ENCODE measurements at regions of chr14 and their contacts with region 1.

Region 1: GRCh38 chr14:99793213-99794150 is at the start of gene EML1:
- DNase-seq: peak; percentile 83 to 88
- ATAC-seq: peak; percentile 77 to 93 (median 89)
- H3K4me3 ChIP-seq: peak within 1 kb of the TSS in 9 of 10 donors; percentile 41 to 62 (median 57)
- H3K27ac ChIP-seq: peak within 1 kb of the TSS; percentile 67 to 93 (median 87)
- H3K4me1 ChIP-seq: peaks cover 3 to 56% (median 30%) of the 10 kb centered on the region in 9 donors
- H3K27me3 ChIP-seq: peaks cover 0 to 46% (median 0%) of the 10 kb centered on the region in 7 donors
- CTCF ChIP-seq: peak in 1 of 9 donors; percentile 14
- total RNA-seq, gene EML1: 28.6 to 49.2 (median 36.3) TPM

Region 2: DNA sequence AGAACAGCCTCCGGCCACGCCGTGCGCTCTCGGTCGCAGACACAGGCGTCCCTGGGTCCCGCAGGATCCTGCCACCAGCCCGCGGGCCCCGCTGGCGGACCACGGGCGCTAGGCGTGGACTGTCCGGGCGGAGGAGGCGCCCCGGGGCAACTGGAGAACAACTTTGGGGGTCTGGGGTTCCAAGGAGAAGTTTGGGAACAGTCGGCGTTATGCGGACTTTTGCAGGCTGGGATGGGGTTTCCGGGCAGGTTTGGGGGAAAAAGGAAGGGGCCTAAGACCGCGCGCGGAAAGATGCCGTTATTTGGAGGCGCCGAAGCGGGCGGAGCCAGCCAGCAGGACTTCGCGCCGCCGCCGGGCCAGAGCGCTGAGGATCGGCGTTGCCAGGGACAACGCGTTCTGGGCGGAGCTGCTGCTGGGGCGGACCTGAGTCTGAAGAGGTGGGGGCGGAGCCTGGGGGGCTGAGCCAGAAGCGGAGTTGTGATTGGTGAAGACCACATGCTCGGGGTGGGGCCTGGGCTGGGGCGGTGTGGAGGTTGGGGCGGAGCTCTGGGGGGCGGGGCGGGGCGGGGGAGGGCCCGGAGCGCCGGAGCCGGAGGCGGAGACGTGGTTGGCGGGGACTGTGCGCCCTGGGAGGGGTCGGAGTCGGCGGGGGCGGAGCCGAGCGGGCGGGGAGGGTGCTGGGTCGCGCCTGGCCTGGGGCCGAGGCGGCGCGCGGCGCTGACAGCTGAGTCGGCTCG is 109.7 kb before region 1 on chr14 and contains the start of gene CYP46A1:
- intact Hi-C with region 1: loop called in 3 of 10 experiments (anchors 5 kb)
- DNase-seq: peak; percentile 100
- ATAC-seq: peak; percentile 97 to 99 (median 98)
- H3K4me3 ChIP-seq: peak within 1 kb of the TSS; percentile 51 to 99 (median 87)
- H3K27ac ChIP-seq: peak within 1 kb of the TSS in 9 of 10 donors; percentile 71 to 94 (median 80)
- H3K4me1 ChIP-seq: peaks cover 9 to 25% (median 15%) of the 10 kb centered on the region in 9 donors
- H3K27me3 ChIP-seq: peaks cover 0 to 25% (median 0%) of the 10 kb centered on the region in 7 donors
- CTCF ChIP-seq: no peak
- total RNA-seq, gene CYP46A1: 2.0 to 6.1 (median 3.9) TPM

Region 3: DNA sequence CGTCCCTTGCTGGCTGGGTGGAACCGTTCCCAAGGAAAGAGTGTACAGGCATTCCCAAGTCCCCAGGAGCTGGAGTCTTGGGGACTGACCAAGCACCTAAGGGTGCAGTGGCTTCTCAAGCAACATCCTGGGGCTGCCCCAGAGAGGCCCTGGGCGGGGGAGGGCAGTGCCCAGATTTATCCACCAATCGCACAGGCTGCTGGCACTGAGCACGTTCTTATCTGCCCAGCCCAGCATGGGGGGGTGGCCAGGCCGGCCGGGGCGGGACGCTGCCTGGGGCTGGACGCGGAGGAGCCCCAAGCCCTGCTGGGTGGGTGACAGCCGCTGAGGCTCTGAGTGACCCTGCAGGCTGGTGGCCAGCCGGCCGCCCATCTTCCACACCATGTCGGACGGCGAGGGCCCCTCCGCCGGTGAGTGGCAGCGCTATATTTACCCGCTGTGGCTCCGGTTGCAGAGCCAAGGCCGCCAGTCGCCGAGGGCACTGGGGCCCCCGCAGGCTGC is 56.0 kb before region 1 on chr14:
- intact Hi-C with region 1: loop called in 8 of 10 experiments (anchors 2 to 10 kb)
- DNase-seq: peak; percentile 77 to 78
- ATAC-seq: peak; percentile 68 to 87 (median 78)
- H3K4me3 ChIP-seq: peak overlapping the region; percentile 53 to 76 (median 66)
- H3K27ac ChIP-seq: peak overlapping the region; percentile 76 to 97 (median 90)
- H3K4me1 ChIP-seq: peaks cover 8 to 97% (median 68%) of the 10 kb centered on the region in 9 donors
- H3K27me3 ChIP-seq: peaks cover 0 to 18% (median 0%) of the 10 kb centered on the region in 7 donors
- CTCF ChIP-seq: no peak

Region 4: GRCh38 chr14:99831903-99832685 is 38.6 kb after region 1 on chr14:
- intact Hi-C with region 1: loop called in 1 of 10 experiments (anchors 5 kb)
- DNase-seq: no peak
- ATAC-seq: no peak
- H3K4me3 ChIP-seq: no peak overlapping the region
- H3K27ac ChIP-seq: no peak overlapping the region
- H3K4me1 ChIP-seq: peaks cover 0 to 8% (median 0%) of the 10 kb centered on the region in 9 donors
- H3K27me3 ChIP-seq: no peaks in the 10 kb centered on the region
- CTCF ChIP-seq: no peak

Region 5: DNA sequence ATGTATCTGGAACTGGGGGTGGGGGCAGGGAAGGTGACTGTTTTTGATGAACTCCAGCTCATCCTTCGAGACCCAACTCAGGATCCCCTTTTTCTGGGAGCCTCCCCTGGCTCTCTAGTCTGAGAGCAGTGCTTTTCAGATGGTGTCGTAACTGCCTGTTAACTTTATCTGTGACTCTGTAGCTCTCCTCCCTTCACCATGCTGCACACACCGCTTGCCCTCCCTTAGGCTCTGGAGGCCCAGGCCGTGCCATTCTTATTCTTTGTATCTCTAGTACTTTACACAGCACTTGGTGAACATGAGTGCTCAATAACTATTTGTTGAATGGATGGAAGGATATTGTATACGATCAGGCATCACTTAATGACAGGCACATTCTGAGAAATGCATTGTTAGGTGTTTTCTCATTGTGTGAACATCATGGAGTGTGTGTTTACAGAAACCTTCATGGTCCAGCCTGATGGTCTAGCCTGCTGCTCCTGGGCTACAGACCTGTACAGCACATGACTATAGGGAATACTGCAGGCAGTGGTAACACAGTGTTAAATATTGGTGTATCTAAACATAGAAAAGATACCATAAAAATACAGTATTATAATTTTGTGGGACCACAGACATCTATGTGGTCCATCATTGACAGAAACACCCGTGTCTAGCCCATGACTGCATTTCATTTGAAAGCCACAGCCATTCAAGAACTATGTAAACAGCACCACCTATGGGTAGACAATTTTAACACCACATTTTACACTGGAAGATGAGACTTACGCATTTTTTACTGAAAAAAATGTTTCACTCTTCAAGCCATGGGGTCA is 91.6 kb after region 1 on chr14:
- intact Hi-C with region 1: loop called in 5 of 10 experiments (anchors 5 to 10 kb)
- DNase-seq: peak in 1 of 2 donors; percentile 50
- ATAC-seq: peak; percentile 54 to 82 (median 70)
- H3K4me3 ChIP-seq: no peak overlapping the region
- H3K27ac ChIP-seq: no peak overlapping the region
- H3K4me1 ChIP-seq: peaks cover 0 to 5% (median 0%) of the 10 kb centered on the region in 9 donors
- H3K27me3 ChIP-seq: no peaks in the 10 kb centered on the region
- CTCF ChIP-seq: peak; percentile 61 to 90 (median 78)

Region 6: GRCh38 chr14:99899578-99900178 is 106.2 kb after region 1 on chr14:
- intact Hi-C with region 1: no loop called
- DNase-seq: no peak
- ATAC-seq: no peak
- H3K4me3 ChIP-seq: no peak overlapping the region
- H3K27ac ChIP-seq: no peak overlapping the region
- H3K4me1 ChIP-seq: no peaks in the 10 kb centered on the region
- H3K27me3 ChIP-seq: no peaks in the 10 kb centered on the region
- CTCF ChIP-seq: peak; percentile 19 to 68 (median 58)

Measured in heart right ventricle (tissue), 16 donors.